ENCODE measurements at regions of chr17 and their contacts with region 1.

Region 1: DNA sequence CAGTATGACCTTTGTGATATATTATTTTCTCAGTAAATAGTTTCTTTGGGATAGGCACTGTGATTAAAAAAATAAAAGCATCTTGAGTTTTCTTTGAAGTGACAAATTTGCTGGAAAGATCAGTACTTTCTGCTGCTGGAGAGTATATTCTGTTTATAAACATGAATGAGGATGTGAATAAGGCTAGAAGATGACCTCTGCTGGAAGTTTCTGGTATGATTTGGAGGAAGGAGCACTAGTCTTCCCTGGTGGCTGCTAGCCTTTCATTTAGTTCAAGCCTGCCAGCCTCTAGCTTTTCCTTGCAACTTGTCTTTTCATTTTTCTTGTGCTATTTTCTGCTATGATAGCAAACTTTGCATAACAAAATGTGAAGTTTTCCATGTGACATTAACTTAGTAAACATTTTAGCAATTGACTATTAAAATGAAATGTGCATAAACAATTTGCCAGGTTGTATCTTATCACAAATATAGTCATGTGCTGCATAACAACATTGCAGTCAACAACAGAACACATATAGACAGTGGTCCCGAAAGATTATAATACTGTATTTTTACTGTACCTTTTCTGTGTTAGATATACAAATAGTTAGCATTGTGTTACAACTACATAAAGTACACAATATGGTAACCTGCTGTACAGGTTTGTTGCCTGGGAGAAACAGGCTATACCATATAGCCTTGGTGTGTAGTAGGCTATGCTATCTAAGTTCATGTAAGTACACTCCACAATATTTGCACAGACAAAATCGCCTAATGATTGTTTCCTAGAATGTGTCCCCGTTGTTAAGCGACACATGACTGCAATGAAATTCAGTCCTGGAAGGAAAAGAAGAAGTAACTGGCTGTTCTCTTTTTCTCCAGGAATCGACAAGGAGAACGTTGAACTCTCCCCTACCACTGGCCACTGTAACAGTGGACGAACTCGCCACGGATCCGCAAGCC is 18.1 kb upstream of the RAB11FIP4 start:
- DNase-seq: no peak
- H3K4me3 Mint-ChIP-seq: no peak overlapping the region
- H3K27ac Mint-ChIP-seq: no peak overlapping the region
- H3K4me1 Mint-ChIP-seq: peaks cover 21% of the 10 kb centered on the region
- H3K27me3 Mint-ChIP-seq: no peaks in the 10 kb centered on the region

Region 2: GRCh38 chr17:30906101-30906911 is 467.1 kb before region 1 on chr17 and contains the start of gene TEFM:
- intact Hi-C with region 1: loop called (anchors 2 kb)
- DNase-seq: peak; percentile 86
- H3K4me3 Mint-ChIP-seq: peak within 1 kb of the TSS; percentile 98
- H3K27ac Mint-ChIP-seq: peak within 1 kb of the TSS; percentile 87
- H3K4me1 Mint-ChIP-seq: peaks cover 35% of the 10 kb centered on the region
- H3K27me3 Mint-ChIP-seq: no peaks in the 10 kb centered on the region
- total RNA-seq, gene TEFM: 16.9 and 19.5 TPM in 2 replicates

Region 3: DNA sequence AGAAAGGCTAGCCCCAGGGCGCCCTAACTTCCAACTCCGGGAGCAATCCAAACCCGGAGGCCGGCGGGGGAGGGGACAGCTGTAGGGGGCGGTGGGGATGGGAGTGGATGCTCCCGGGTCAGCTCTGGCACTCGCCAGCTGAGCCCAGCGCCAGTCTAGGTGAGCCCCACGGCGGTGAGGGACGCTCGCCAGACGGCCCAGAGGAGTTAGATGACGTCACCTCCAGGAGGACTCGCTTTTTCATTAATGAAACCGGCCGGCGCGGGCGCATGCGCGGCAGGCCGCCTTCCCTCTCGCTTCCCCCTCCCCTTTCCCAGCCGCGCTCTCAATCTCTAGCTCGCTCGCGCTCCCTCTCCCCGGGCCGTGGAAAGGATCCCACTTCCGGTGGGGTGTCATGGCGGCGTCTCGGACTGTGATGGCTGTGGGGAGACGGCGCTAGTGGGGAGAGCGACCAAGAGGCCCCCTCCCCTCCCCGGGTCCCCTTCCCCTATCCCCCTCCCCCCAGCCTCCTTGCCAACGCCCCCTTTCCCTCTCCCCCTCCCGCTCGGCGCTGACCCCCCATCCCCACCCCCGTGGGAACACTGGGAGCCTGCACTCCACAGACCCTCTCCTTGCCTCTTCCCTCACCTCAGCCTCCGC is 278.7 kb before region 1 on chr17 and contains the start of gene NF1:
- intact Hi-C with region 1: loop called (anchors 10 kb)
- DNase-seq: peak; percentile 78
- H3K4me3 Mint-ChIP-seq: peak within 1 kb of the TSS; percentile 97
- H3K27ac Mint-ChIP-seq: peak within 1 kb of the TSS; percentile 72
- H3K4me1 Mint-ChIP-seq: peaks cover 14% of the 10 kb centered on the region
- H3K27me3 Mint-ChIP-seq: peaks cover under 1% of the 10 kb centered on the region
- total RNA-seq, gene NF1: 30.0 and 31.5 TPM in 2 replicates

Region 4: DNA sequence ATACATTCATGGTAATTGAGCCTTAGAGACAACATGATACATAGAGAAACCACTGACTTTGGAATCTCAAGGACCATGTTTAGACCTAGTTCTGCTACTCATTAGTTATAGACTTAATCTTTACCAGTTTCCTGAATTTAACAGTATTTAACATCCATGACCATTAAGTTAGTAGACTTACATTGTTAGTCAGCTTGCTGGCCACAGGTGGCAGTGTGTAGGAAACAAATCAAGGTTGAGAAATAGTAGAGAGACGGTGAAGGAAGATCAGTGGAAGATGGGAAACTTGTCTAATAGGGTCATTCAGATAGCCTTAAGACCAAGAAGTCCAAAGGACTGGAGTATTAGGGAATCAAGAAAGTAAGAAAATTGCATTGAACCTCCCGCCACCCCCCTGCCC is 107.4 kb before region 1 on chr17:
- intact Hi-C with region 1: loop called (anchors 1 kb)
- DNase-seq: no peak
- H3K4me3 Mint-ChIP-seq: no peak overlapping the region
- H3K27ac Mint-ChIP-seq: no peak overlapping the region
- H3K4me1 Mint-ChIP-seq: no peaks in the 10 kb centered on the region
- H3K27me3 Mint-ChIP-seq: no peaks in the 10 kb centered on the region

Region 5: GRCh38 chr17:31321481-31321880 is 51.9 kb before region 1 on chr17 and contains the start of gene EVI2A:
- intact Hi-C with region 1: loop called (anchors 2 kb)
- DNase-seq: peak; percentile 80
- H3K4me3 Mint-ChIP-seq: peak within 1 kb of the TSS; percentile 88
- H3K27ac Mint-ChIP-seq: peak within 1 kb of the TSS; percentile 92
- H3K4me1 Mint-ChIP-seq: peaks cover 46% of the 10 kb centered on the region
- H3K27me3 Mint-ChIP-seq: no peaks in the 10 kb centered on the region
- total RNA-seq, gene EVI2A: 46.3 and 47.9 TPM in 2 replicates

Measured in activated T-helper 1 cell treated with anti-CD3 and anti-CD28 coated beads, Interleukin-12 subunit alpha, Interleukin-12 subunit beta, Interleukin-2, Interleukin-4 antibody, amounts not matched to agents 30 ng/mL and 10 ng/mL and 1 ng/mL, durations not matched to agents 14 hours and 24 hours and 36 hours (primary cell).